PC-9 (cell line): ENCODE measurements at regions of chr2 and their contacts with region 1.

Region 1: DNA sequence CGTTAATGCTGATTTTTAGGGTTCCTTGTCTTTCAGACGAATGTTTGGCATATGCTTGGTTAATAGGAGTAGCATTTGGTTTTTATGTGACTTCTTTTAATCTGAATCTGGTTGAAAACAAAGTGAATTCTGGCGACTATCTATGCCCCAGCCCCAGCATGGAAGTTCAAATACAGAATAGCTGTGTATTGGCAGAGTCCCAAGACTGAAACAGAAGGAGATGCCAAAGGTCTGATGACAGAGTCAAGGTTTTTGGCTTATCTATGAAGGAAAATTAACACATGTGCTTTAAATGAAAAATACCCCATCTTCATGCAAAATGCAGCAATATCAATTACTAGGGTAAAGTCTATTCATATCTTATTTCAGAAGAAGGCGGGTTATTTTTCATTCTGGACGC is 734.8 kb upstream of the NXPH2 start:
- DNase-seq: no peak
- H3K4me3 ChIP-seq: no peak overlapping the region
- H3K27ac ChIP-seq: no peak overlapping the region
- H3K4me1 ChIP-seq: no peaks in the 10 kb centered on the region
- H3K27me3 ChIP-seq: no peaks in the 10 kb centered on the region
- CTCF ChIP-seq: no peak

Region 2: GRCh38 chr2:139394801-139395200 is 120.2 kb before region 1 on chr2:
- CTCF ChIA-PET with region 1: no interaction called
- POLR2A ChIA-PET with region 1: no interaction called
- intact Hi-C with region 1: no loop called
- DNase-seq: no peak
- H3K4me3 ChIP-seq: no peak overlapping the region
- H3K27ac ChIP-seq: no peak overlapping the region
- H3K4me1 ChIP-seq: no peaks in the 10 kb centered on the region
- H3K27me3 ChIP-seq: no peaks in the 10 kb centered on the region
- CTCF ChIP-seq: no peak

Region 3: DNA sequence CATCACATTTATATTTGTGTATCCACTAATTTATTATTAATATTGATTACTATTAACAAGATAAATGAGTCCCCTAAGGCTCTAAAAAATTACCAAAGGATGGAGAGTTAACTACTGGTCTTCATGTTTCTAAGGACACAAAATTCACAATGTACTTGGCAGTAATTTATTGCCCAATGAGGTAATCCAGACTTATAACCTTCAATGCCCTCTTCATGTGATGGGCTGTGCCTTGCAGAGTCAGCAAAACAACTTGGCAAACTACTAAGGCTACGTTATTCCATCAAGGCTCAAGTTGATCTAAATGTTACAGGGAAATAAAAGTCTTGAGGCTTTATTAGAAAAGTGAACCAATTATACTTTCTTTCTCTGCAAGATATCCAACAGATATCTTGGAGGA is 70.2 kb after region 1 on chr2:
- CTCF ChIA-PET with region 1: interaction called, 15 read pairs
- POLR2A ChIA-PET with region 1: no interaction called
- intact Hi-C with region 1: no loop called
- DNase-seq: no peak
- H3K4me3 ChIP-seq: no peak overlapping the region
- H3K27ac ChIP-seq: no peak overlapping the region
- H3K4me1 ChIP-seq: no peaks in the 10 kb centered on the region
- H3K27me3 ChIP-seq: no peaks in the 10 kb centered on the region
- CTCF ChIP-seq: no peak